Ascending aorta (tissue), 2 donors: ENCODE measurements at regions of chr20 and their contacts with region 1.

Region 1: GRCh38 chr20:53578492-53579222 is 15.0 kb downstream of the ZNF217 start:
- DNase-seq: peak in 1 of 2 donors; percentile 81
- H3K4me3 ChIP-seq: peak overlapping the region; percentile 11 to 28
- H3K27ac ChIP-seq: peak overlapping the region in 1 of 2 donors; percentile 75
- H3K4me1 ChIP-seq: peaks cover 10 to 21% of the 10 kb centered on the region in 2 donors
- H3K27me3 ChIP-seq: no peaks in the 10 kb centered on the region
- CTCF ChIP-seq: peak; percentile 67 to 96 (median 84)

Region 2: GRCh38 chr20:53623454-53624211 is 45.0 kb after region 1 on chr20:
- intact Hi-C with region 1: loop called (anchors 5 kb)
- DNase-seq: peak; percentile 27 to 86
- H3K4me3 ChIP-seq: peak overlapping the region; percentile 46 to 53
- H3K27ac ChIP-seq: peak overlapping the region; percentile 86 to 94
- H3K4me1 ChIP-seq: peaks cover 12 to 22% of the 10 kb centered on the region in 2 donors
- H3K27me3 ChIP-seq: no peaks in the 10 kb centered on the region
- CTCF ChIP-seq: no peak

Region 3: DNA sequence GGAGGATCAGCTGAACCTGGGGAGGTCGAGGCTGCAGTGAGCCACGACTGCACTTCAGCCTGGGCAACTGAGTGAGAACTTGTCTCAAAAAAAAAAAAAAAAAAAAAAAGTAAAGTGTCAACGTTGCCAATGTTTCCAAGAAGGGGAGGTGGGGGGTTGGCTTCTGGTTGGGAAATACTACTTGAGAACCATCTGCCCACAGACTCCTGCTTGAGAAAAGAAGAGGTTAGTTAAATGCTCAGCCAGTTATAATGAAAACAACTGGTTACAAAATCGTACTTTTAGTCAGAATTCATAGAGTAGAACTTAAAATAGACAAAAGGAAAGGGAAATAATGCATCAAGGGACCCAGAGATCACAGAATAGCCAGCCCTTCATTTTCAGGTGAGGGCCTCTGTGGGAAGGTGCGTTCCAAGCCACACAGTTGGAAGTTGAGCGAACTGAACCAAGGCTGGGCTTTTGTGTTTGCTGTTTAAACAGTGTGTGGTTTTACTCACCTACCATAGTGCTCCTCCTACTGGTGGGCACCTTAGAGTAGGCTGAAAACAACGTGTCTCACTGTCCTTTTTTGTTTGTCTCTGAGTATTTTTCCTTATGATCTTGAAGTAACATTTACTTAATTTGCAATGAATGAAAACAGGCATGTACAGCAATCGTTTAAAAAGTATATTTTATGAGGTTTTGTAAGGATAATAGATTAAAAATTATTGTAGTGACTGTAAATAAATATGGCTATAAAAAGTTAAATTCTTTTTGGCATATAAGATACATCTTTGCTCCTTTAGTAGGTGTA is 291.0 kb after region 1 on chr20:
- intact Hi-C with region 1: loop called (anchors 2 kb)
- DNase-seq: peak in 1 of 2 donors; percentile 79
- H3K4me3 ChIP-seq: no peak overlapping the region
- H3K27ac ChIP-seq: no peak overlapping the region
- H3K4me1 ChIP-seq: peaks cover 0 to 29% of the 10 kb centered on the region in 2 donors
- H3K27me3 ChIP-seq: no peaks in the 10 kb centered on the region
- CTCF ChIP-seq: peak; percentile 47 to 73 (median 64)

Region 4: DNA sequence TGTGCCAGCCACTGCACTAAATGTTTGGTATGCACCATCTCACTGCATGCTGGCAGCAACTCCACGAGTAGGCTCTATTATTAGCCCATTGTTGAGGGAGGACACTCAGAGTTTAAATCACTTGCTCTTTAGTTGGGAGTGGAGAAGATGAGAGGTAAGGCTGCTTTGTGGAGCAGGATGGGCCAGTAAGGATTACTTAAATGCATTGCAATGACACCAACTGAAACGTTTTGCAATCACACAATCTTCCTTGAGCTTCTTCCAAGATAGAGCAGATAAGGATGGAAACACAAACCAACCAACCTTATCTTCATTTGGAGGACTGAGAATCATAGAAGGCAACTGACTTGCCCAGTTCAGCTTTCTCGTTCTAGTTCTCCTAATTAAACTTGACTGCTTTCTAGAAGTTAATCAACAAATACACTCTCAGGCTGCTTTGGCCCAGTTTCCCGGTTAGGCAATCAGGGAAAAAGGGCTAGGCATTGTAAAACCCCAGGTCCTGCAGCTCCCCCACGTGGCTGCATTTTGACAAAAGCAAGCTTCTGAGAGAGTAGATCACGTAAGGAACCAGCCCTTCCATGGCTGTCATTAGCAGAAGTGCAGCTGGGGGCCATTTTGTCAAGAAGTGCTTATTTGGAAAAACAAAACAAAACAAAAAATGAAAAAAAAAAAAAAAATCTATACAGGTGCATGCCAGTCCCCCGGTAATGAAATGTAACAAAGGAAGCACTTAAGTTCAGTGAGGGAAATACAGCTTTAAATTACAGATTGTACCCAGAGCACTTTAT is 361.1 kb after region 1 on chr20:
- intact Hi-C with region 1: loop called (anchors 1 kb)
- DNase-seq: peak; percentile 77 to 94
- H3K4me3 ChIP-seq: no peak overlapping the region
- H3K27ac ChIP-seq: peak overlapping the region; percentile 12 to 57
- H3K4me1 ChIP-seq: peaks cover 0 to 15% of the 10 kb centered on the region in 2 donors
- H3K27me3 ChIP-seq: no peaks in the 10 kb centered on the region
- CTCF ChIP-seq: peak; percentile 56 to 80 (median 74)

Region 5: DNA sequence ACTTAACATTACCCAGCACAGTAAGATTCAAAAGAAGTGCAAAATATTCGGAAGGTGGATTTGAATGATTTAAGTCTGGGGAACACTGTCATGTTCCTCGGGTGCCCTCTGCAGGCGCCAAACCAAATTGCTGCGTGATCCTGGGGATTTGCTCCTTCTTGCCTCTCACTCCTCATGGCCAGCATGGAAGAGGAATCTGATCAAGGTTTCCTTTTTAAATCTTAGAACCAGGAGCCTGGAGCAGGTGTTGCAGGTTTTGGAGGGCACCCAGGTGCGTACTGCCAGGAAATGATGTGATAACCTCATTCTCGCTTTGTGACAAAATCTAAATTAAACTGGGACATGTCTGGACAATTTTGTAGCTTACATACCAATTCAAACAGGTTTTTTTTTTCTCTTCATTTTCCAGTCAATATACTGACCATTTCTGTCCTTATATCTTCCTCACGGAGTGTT is 621.1 kb after region 1 on chr20:
- intact Hi-C with region 1: loop called (anchors 5 kb)
- DNase-seq: peak in 1 of 2 donors; percentile 82
- H3K4me3 ChIP-seq: no peak overlapping the region
- H3K27ac ChIP-seq: no peak overlapping the region
- H3K4me1 ChIP-seq: no peaks in the 10 kb centered on the region
- H3K27me3 ChIP-seq: no peaks in the 10 kb centered on the region
- CTCF ChIP-seq: peak; percentile 58 to 91 (median 88)